Prostate gland (tissue), 2 donors: ENCODE measurements at regions of chr14 and their contacts with region 1.

Region 1: GRCh38 chr14:75176142-75176820 is at the start of gene TMED10:
- DNase-seq: peak; percentile 84
- H3K4me3 ChIP-seq: peak within 1 kb of the TSS; percentile 84 to 98
- H3K27ac ChIP-seq: peak within 1 kb of the TSS; percentile 89 to 96
- H3K4me1 ChIP-seq: peaks cover 2% of the 10 kb centered on the region
- H3K27me3 ChIP-seq: no peaks in the 10 kb centered on the region
- CTCF ChIP-seq: peak in 1 of 4 experiments; percentile 5
- POLR2A ChIP-seq: peak; percentile 23
- total RNA-seq, gene TMED10: 320 to 397 TPM

Region 2: DNA sequence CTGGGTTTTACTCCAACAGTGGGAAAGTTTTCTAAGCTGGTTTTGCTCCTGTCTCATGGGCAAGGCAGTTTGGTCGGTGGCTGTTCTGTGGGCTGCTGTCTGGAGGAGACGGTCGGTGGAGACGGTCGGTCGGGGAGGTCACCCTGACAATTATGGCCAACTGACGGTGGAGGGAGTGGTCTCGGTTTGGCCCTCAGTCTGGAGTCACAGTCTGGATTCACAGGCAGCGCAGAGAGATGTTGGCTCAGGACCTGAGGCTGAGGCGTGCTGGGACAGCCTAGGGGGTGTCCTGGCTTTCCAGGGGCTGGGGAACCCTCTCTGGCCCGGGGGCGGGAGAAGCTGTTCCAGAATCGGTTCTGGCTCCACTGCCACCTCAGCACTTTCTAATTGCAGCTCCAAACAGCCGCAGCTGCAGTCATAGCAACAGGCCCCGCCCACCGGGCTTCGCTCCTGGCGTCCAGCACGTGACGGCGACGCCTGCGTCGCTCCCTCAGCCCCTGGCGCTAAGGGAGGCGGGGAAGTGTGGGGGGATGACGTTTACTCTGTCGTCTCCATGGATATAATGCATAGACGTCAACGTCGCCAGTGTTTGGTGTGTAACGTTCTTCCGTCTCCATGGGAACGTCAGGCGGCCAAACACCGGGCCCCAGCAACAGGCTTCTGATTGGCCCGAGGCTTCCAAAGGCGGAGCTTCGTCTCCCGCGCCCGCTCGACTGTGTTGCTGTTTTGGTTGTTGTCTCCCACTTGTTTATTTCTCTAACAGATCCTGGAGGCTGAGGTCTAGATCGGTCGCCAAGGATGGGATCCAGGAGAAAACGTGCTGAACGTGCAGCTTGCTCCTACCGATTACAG is 82.6 kb after region 1 on chr14:
- intact Hi-C with region 1: loop called (anchors 5 kb)
- DNase-seq: peak; percentile 98
- H3K4me3 ChIP-seq: peak overlapping the region; percentile 18 to 29
- H3K27ac ChIP-seq: peak overlapping the region; percentile 93 to 97
- H3K4me1 ChIP-seq: peaks cover 26% of the 10 kb centered on the region
- H3K27me3 ChIP-seq: no peaks in the 10 kb centered on the region
- CTCF ChIP-seq: peak in 1 of 4 experiments; percentile 11
- POLR2A ChIP-seq: peak; percentile 88

Region 3: GRCh38 chr14:75278422-75279161 is 102.3 kb after region 1 on chr14 and contains the start of gene FOS:
- intact Hi-C with region 1: loop called (anchors 5 kb)
- DNase-seq: peak; percentile 92
- H3K4me3 ChIP-seq: peak within 1 kb of the TSS; percentile 44 to 59
- H3K27ac ChIP-seq: peak within 1 kb of the TSS; percentile 96 to 98
- H3K4me1 ChIP-seq: peaks cover 4% of the 10 kb centered on the region
- H3K27me3 ChIP-seq: no peaks in the 10 kb centered on the region
- CTCF ChIP-seq: peak in 2 of 4 experiments; percentile 38 to 50
- POLR2A ChIP-seq: peak; percentile 98
- total RNA-seq, gene FOS: 73.9 to 127 TPM

Region 4: GRCh38 chr14:75469606-75470237 is 293.4 kb after region 1 on chr14:
- intact Hi-C with region 1: no loop called
- DNase-seq: peak; percentile 88
- H3K4me3 ChIP-seq: peak overlapping the region in 1 of 2 donors; percentile 0
- H3K27ac ChIP-seq: peak overlapping the region in 1 of 2 donors; percentile 28
- H3K4me1 ChIP-seq: no peaks in the 10 kb centered on the region
- H3K27me3 ChIP-seq: no peaks in the 10 kb centered on the region
- CTCF ChIP-seq: peak in 1 of 4 experiments; percentile 7
- POLR2A ChIP-seq: no peak